Activated naive CD8-positive, alpha-beta T cell treated with anti-CD3 and anti-CD28 coated beads, Interleukin-2, amount 10 ng/mL, durations not matched to agents 7 days and 5 days (primary cell): ENCODE measurements at regions of chr9 and their contacts with region 1.

Region 1: DNA sequence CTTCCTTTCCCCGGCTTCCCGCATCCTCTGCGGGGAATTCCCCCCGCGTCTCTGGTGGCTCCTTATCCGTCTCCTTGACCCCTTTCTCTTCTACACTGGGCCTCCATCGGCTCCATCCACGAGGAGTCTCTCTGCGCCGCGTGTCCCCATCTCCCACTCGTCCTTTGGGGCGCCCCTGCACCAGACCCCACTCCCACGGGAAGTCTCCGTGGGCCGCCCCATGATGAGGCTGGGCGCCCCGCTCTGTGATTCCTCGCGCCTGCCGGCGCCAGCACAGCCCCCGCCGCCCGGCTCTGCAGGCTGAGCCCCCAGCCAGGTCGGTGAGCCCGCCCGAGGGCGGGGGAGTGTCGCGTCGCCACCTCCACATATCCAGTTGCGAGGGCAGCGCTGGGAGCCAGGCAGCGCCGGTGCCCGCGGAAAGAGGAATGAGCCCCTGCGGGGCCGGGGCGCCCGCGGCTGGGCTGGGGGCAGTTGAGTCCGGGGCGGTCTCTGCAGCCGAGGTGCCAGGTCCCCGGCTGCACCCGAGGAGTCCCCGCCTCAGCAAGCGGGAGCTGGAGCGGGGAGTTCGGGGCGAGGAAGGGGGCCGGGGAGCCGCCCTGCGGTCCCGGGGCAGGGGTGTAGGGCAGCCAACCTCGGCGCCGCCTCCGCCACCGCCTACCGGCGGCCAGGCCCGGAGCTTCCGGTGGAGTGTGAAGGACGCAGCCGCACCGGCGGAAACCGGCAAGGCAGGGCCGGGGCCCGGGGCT is 2.1 kb upstream of the TRAF1 start:
- DNase-seq: peak; percentile 88
- ATAC-seq: peak; percentile 45
- H3K4me3 Mint-ChIP-seq: peak overlapping the region; percentile 93
- H3K27ac Mint-ChIP-seq: peak overlapping the region; percentile 94
- H3K4me1 Mint-ChIP-seq: peaks cover 69% of the 10 kb centered on the region
- H3K27me3 Mint-ChIP-seq: no peaks in the 10 kb centered on the region

Region 2: GRCh38 chr9:120868676-120869359 is 59.8 kb before region 1 on chr9:
- POLR2A ChIA-PET with region 1: interaction called, 84 read pairs
- DNase-seq: peak; percentile 98
- ATAC-seq: peak; percentile 92
- H3K4me3 Mint-ChIP-seq: peak overlapping the region; percentile 92
- H3K27ac Mint-ChIP-seq: peak overlapping the region; percentile 99
- H3K4me1 Mint-ChIP-seq: peaks cover 50% of the 10 kb centered on the region
- H3K27me3 Mint-ChIP-seq: no peaks in the 10 kb centered on the region

Region 3: GRCh38 chr9:120882935-120883607 is 45.6 kb before region 1 on chr9:
- POLR2A ChIA-PET with region 1: interaction called, 117 read pairs
- DNase-seq: no peak
- ATAC-seq: no peak
- H3K4me3 Mint-ChIP-seq: peak overlapping the region; percentile 43
- H3K27ac Mint-ChIP-seq: peak overlapping the region; percentile 64
- H3K4me1 Mint-ChIP-seq: peaks cover 59% of the 10 kb centered on the region
- H3K27me3 Mint-ChIP-seq: no peaks in the 10 kb centered on the region

Region 4: GRCh38 chr9:120904061-120904977 is 24.3 kb before region 1 on chr9:
- POLR2A ChIA-PET with region 1: interaction called, 94 read pairs
- DNase-seq: peak; percentile 62
- ATAC-seq: peak; percentile 57
- H3K4me3 Mint-ChIP-seq: peak overlapping the region; percentile 62
- H3K27ac Mint-ChIP-seq: peak overlapping the region; percentile 93
- H3K4me1 Mint-ChIP-seq: peaks cover 77% of the 10 kb centered on the region
- H3K27me3 Mint-ChIP-seq: no peaks in the 10 kb centered on the region

Region 5: DNA sequence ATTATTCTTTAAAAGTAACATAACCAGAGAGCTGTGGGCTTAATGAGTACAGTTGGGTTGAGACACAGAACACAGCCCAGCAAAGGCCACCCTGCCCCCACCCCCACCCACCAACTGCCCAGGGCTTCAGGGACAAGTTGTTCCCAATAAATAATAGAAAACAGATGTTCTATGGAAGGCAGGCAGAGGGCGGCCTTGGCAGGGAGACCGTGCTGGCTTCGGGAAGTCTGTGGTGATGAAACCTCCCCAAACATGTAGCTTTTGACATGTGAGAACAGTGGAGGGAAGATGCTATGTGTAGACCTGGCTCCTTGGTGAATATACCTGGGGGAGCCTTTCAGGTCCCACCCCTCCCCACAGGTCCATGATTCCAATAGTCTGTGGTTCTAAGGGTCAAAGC is 12.1 kb before region 1 on chr9:
- POLR2A ChIA-PET with region 1: interaction called, 38 read pairs
- DNase-seq: no peak
- ATAC-seq: no peak
- H3K4me3 Mint-ChIP-seq: peak overlapping the region; percentile 60
- H3K27ac Mint-ChIP-seq: peak overlapping the region; percentile 83
- H3K4me1 Mint-ChIP-seq: peaks cover 66% of the 10 kb centered on the region
- H3K27me3 Mint-ChIP-seq: no peaks in the 10 kb centered on the region